Naive thymus-derived CD4-positive, alpha-beta T cell (primary cell): ENCODE measurements at regions of chr5 and their contacts with region 1.

Region 1: GRCh38 chr5:55096861-55097260 is 5.6 kb upstream of the GZMA start:
- DNase-seq: peak in 7 of 9 donors; percentile 61 to 83 (median 74)
- ATAC-seq: peak; percentile 85
- H3K4me3 ChIP-seq: peak overlapping the region; percentile 33
- H3K4me3 Mint-ChIP-seq: peak overlapping the region; percentile 16 to 79 (median 70)
- H3K27ac ChIP-seq: peak overlapping the region; percentile 59
- H3K27ac Mint-ChIP-seq: peak overlapping the region; percentile 88 to 100 (median 94)
- H3K4me1 ChIP-seq: peaks cover 42 to 52% of the 10 kb centered on the region in 2 donors
- H3K4me1 Mint-ChIP-seq: peaks cover 50 to 95% (median 90%) of the 10 kb centered on the region in 7 donors
- H3K27me3 ChIP-seq: no peaks in the 10 kb centered on the region
- H3K27me3 Mint-ChIP-seq: no peaks in the 10 kb centered on the region

Region 2: DNA sequence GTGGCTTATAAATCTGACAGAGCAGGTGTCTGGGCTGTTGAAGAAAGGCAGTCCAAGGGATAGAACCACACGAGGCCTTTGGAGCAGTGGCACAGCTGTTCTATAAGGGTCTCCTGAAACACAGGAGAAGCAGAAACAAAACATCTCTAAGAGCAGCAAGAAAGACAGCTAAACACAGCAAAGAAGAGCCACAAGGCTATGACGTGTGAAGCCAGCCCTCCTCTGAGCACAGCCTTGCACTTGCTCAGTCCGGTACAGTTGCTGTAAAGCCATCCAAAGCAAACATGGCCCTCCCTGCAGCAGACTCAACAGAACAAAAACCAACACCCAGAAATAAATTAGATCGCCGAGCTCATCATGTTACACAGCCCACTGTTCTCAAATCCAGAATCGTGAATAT is 75.5 kb before region 1 on chr5:
- CTCF ChIA-PET with region 1: interaction called, 4 read pairs
- POLR2A ChIA-PET with region 1: interaction called, 12 read pairs
- intact Hi-C with region 1: no loop called
- DNase-seq: no peak
- ATAC-seq: no peak
- H3K4me3 ChIP-seq: no peak overlapping the region
- H3K4me3 Mint-ChIP-seq: peak overlapping the region in 2 of 10 donors; percentile 19 to 30
- H3K27ac ChIP-seq: no peak overlapping the region
- H3K27ac Mint-ChIP-seq: peak overlapping the region in 1 of 9 donors; percentile 31
- H3K4me1 ChIP-seq: peaks cover 23 to 31% of the 10 kb centered on the region in 2 donors
- H3K4me1 Mint-ChIP-seq: peaks cover 18 to 51% (median 49%) of the 10 kb centered on the region in 7 donors
- H3K27me3 ChIP-seq: no peaks in the 10 kb centered on the region
- H3K27me3 Mint-ChIP-seq: no peaks in the 10 kb centered on the region

Region 3: GRCh38 chr5:55062039-55062779 is 34.7 kb before region 1 on chr5:
- CTCF ChIA-PET with region 1: interaction called, 6 read pairs
- POLR2A ChIA-PET with region 1: interaction called, 14 read pairs
- intact Hi-C with region 1: loop called (anchors 1 kb)
- DNase-seq: peak in 7 of 9 donors; percentile 25 to 71 (median 46)
- ATAC-seq: peak; percentile 81
- H3K4me3 ChIP-seq: peak overlapping the region; percentile 33
- H3K4me3 Mint-ChIP-seq: peak overlapping the region; percentile 43 to 94 (median 82)
- H3K27ac ChIP-seq: no peak overlapping the region
- H3K27ac Mint-ChIP-seq: peak overlapping the region; percentile 17 to 98 (median 62)
- H3K4me1 ChIP-seq: peaks cover 26 to 30% of the 10 kb centered on the region in 2 donors
- H3K4me1 Mint-ChIP-seq: peaks cover 28 to 80% (median 67%) of the 10 kb centered on the region in 7 donors
- H3K27me3 ChIP-seq: no peaks in the 10 kb centered on the region
- H3K27me3 Mint-ChIP-seq: peaks cover 0 to 7% (median 0%) of the 10 kb centered on the region in 5 donors

Region 4: DNA sequence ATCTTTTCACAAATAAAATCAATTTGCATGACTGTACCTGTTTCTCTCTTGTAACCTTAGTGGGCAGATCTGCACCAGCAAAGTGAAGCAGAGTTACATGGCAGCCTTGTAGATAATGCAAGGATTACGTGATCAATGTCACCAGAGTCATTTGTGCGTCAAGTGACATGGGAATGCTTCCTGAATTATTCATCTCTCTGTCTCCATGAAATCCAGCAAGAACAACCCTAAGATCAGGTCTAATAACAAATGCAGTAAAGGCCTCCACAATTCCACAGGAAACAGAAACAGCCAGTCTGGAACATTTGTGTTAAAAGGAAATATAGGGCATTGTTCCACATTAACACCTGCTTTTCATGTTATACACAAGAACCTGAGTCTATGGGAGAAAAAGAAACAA is 13.4 kb after region 1 on chr5:
- CTCF ChIA-PET with region 1: no interaction called
- POLR2A ChIA-PET with region 1: no interaction called
- intact Hi-C with region 1: no loop called
- DNase-seq: no peak
- ATAC-seq: no peak
- H3K4me3 ChIP-seq: no peak overlapping the region
- H3K4me3 Mint-ChIP-seq: no peak overlapping the region
- H3K27ac ChIP-seq: no peak overlapping the region
- H3K27ac Mint-ChIP-seq: peak overlapping the region in 1 of 9 donors; percentile 13
- H3K4me1 ChIP-seq: peaks cover 1 to 31% of the 10 kb centered on the region in 2 donors
- H3K4me1 Mint-ChIP-seq: peaks cover 15 to 64% (median 26%) of the 10 kb centered on the region in 7 donors
- H3K27me3 ChIP-seq: no peaks in the 10 kb centered on the region
- H3K27me3 Mint-ChIP-seq: peaks cover 0 to 9% (median 0%) of the 10 kb centered on the region in 5 donors

Region 5: GRCh38 chr5:55146543-55147151 is 49.8 kb after region 1 on chr5:
- CTCF ChIA-PET with region 1: interaction called, 25 read pairs
- POLR2A ChIA-PET with region 1: interaction called, 3 read pairs
- intact Hi-C with region 1: loop called (anchors 1 to 2 kb)
- DNase-seq: peak; percentile 47 to 84 (median 77)
- ATAC-seq: peak; percentile 91
- H3K4me3 ChIP-seq: no peak overlapping the region
- H3K4me3 Mint-ChIP-seq: peak overlapping the region in 7 of 10 donors; percentile 21 to 74 (median 42)
- H3K27ac ChIP-seq: no peak overlapping the region
- H3K27ac Mint-ChIP-seq: peak overlapping the region in 6 of 9 donors; percentile 1 to 60 (median 27)
- H3K4me1 ChIP-seq: peaks cover 5 to 14% of the 10 kb centered on the region in 2 donors
- H3K4me1 Mint-ChIP-seq: peaks cover 12 to 38% (median 20%) of the 10 kb centered on the region in 7 donors
- H3K27me3 ChIP-seq: no peaks in the 10 kb centered on the region
- H3K27me3 Mint-ChIP-seq: peaks cover 0 to 62% (median 0%) of the 10 kb centered on the region in 5 donors

Region 6: GRCh38 chr5:55241746-55242145 is 144.9 kb after region 1 on chr5:
- CTCF ChIA-PET with region 1: no interaction called
- POLR2A ChIA-PET with region 1: no interaction called
- intact Hi-C with region 1: no loop called
- DNase-seq: no peak
- ATAC-seq: no peak
- H3K4me3 ChIP-seq: no peak overlapping the region
- H3K4me3 Mint-ChIP-seq: no peak overlapping the region
- H3K27ac ChIP-seq: no peak overlapping the region
- H3K27ac Mint-ChIP-seq: no peak overlapping the region
- H3K4me1 ChIP-seq: no peaks in the 10 kb centered on the region
- H3K4me1 Mint-ChIP-seq: no peaks in the 10 kb centered on the region
- H3K27me3 ChIP-seq: no peaks in the 10 kb centered on the region
- H3K27me3 Mint-ChIP-seq: peaks cover 10 to 83% (median 27%) of the 10 kb centered on the region in 5 donors

Region 7: GRCh38 chr5:56951946-56952691 is 1855.3 kb after region 1 on chr5 and contains the start of gene MIER3:
- CTCF ChIA-PET with region 1: no interaction called
- POLR2A ChIA-PET with region 1: no interaction called
- intact Hi-C with region 1: loop called in 1 of 2 experiments (anchors 5 kb)
- DNase-seq: peak; percentile 66 to 87 (median 80)
- ATAC-seq: peak; percentile 94
- H3K4me3 ChIP-seq: peak within 1 kb of the TSS; percentile 75
- H3K4me3 Mint-ChIP-seq: peak within 1 kb of the TSS; percentile 89 to 98 (median 96)
- H3K27ac ChIP-seq: peak within 1 kb of the TSS; percentile 73
- H3K27ac Mint-ChIP-seq: peak within 1 kb of the TSS in 8 of 9 donors; percentile 84 to 95 (median 88)
- H3K4me1 ChIP-seq: peaks cover 6 to 10% of the 10 kb centered on the region in 2 donors
- H3K4me1 Mint-ChIP-seq: peaks cover 18 to 32% (median 22%) of the 10 kb centered on the region in 7 donors
- H3K27me3 ChIP-seq: peaks cover 0 to 5% of the 10 kb centered on the region in 2 donors
- H3K27me3 Mint-ChIP-seq: peaks cover 10 to 45% (median 24%) of the 10 kb centered on the region in 5 donors
- total RNA-seq, gene MIER3: 14.9 to 35.0 (median 26.2) TPM